Activated naive CD4-positive, alpha-beta T cell treated with anti-CD3 and anti-CD28 coated beads for 36 hours (primary cell): ENCODE measurements at regions of chr3 and their contacts with region 1.

Region 1: GRCh38 chr3:46538803-46539442 is 27.2 kb downstream of the LRRC2 start:
- DNase-seq: peak; percentile 90
- H3K4me3 Mint-ChIP-seq: peak overlapping the region; percentile 54
- H3K27ac Mint-ChIP-seq: peak overlapping the region; percentile 78
- H3K4me1 Mint-ChIP-seq: peaks cover 58% of the 10 kb centered on the region
- H3K27me3 Mint-ChIP-seq: no peaks in the 10 kb centered on the region

Region 2: GRCh38 chr3:46504789-46505188 is 34.1 kb before region 1 on chr3:
- CTCF ChIA-PET with region 1: no interaction called
- intact Hi-C with region 1: loop called (anchors 2 kb)
- DNase-seq: peak; percentile 61
- H3K4me3 Mint-ChIP-seq: no peak overlapping the region
- H3K27ac Mint-ChIP-seq: no peak overlapping the region
- H3K4me1 Mint-ChIP-seq: peaks cover 23% of the 10 kb centered on the region
- H3K27me3 Mint-ChIP-seq: no peaks in the 10 kb centered on the region

Region 3: GRCh38 chr3:46558184-46559043 is 19.5 kb after region 1 on chr3:
- CTCF ChIA-PET with region 1: interaction called, 9 read pairs
- intact Hi-C with region 1: loop called (anchors 2 kb)
- DNase-seq: peak; percentile 82
- H3K4me3 Mint-ChIP-seq: peak overlapping the region; percentile 69
- H3K27ac Mint-ChIP-seq: no peak overlapping the region
- H3K4me1 Mint-ChIP-seq: peaks cover 10% of the 10 kb centered on the region
- H3K27me3 Mint-ChIP-seq: peaks cover 3% of the 10 kb centered on the region